ENCODE measurements at regions of chr14 and their contacts with region 1.

Region 1: GRCh38 chr14:61475316-61475715 is 153.9 kb downstream of the PRKCH start:
- DNase-seq: no peak
- H3K4me3 ChIP-seq: no peak overlapping the region
- H3K27me3 ChIP-seq: no peaks in the 10 kb centered on the region
- CTCF ChIP-seq: peak; percentile 63

Region 2: DNA sequence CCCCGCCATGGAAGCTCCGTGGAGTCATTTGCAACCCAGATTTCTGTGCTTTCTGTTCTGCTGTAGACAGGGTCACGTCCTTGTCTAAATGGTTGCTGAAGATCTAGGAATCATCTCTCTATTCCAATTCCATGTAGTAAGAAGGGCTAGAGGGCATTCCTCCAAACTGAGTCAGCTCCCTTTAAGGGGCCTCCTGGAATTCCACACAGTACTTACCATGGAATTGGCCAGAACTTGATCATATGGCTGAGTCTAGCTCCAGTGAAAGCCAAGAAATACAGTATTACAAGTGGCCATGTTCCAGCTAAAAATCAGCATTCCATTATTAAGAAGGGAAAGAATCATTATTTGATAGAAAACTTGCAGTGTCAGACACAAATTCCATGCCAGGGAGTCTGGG is 17.9 kb after region 1 on chr14:
- CTCF ChIA-PET with region 1: interaction called, 21 read pairs
- POLR2A ChIA-PET with region 1: no interaction called
- DNase-seq: no peak
- H3K4me3 ChIP-seq: no peak overlapping the region
- H3K27me3 ChIP-seq: no peaks in the 10 kb centered on the region
- CTCF ChIP-seq: no peak

Region 3: DNA sequence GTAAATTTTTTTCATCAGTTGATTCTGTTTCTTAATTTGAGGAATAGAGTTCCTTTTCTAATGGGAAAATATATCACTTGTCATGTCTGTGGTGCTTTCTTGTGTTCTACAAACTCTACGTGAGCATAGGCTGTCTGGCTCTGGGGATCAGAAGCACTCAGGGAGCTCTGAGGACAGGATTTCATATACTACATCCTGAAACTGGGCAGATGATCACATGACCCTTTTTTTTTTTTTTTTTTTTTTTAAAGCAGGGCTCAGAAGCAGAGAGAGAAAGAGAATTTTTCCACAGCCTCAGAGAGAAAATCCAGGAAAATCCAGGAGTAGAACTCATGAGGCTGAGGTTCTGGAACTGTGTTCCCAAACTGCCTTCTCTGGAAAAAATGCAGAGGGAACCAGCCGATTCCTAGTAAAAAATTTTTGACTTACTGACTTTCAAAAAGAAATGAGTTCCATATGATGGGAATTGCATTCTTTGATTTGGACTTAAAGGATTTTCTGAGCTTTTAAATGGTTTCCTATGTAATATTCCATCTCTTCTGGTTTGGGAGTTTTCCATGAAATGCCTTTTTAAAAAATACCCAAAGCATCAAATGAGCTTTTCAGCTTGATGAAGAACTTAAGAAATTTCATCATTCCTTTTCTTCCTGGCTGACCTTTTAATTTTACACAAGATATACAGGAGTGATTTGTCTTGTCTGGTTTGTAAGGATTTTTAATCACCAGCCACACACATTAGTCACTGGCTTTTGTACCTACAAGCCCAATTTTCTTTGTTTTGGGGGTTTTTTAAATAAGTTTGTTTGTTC is 36.9 kb after region 1 on chr14:
- CTCF ChIA-PET with region 1: interaction called, 13 read pairs
- POLR2A ChIA-PET with region 1: no interaction called
- DNase-seq: peak; percentile 85
- H3K4me3 ChIP-seq: no peak overlapping the region
- H3K27me3 ChIP-seq: no peaks in the 10 kb centered on the region
- CTCF ChIP-seq: no peak

Region 4: GRCh38 chr14:61525293-61526011 is 50.1 kb after region 1 on chr14:
- CTCF ChIA-PET with region 1: interaction called, 10 read pairs
- POLR2A ChIA-PET with region 1: no interaction called
- DNase-seq: no peak
- H3K4me3 ChIP-seq: no peak overlapping the region
- H3K27me3 ChIP-seq: no peaks in the 10 kb centered on the region
- CTCF ChIP-seq: no peak

Region 5: GRCh38 chr14:61537563-61538463 is 62.5 kb after region 1 on chr14:
- CTCF ChIA-PET with region 1: interaction called, 16 read pairs
- POLR2A ChIA-PET with region 1: no interaction called
- DNase-seq: no peak
- H3K4me3 ChIP-seq: no peak overlapping the region
- H3K27me3 ChIP-seq: no peaks in the 10 kb centered on the region
- CTCF ChIP-seq: no peak

Region 6: DNA sequence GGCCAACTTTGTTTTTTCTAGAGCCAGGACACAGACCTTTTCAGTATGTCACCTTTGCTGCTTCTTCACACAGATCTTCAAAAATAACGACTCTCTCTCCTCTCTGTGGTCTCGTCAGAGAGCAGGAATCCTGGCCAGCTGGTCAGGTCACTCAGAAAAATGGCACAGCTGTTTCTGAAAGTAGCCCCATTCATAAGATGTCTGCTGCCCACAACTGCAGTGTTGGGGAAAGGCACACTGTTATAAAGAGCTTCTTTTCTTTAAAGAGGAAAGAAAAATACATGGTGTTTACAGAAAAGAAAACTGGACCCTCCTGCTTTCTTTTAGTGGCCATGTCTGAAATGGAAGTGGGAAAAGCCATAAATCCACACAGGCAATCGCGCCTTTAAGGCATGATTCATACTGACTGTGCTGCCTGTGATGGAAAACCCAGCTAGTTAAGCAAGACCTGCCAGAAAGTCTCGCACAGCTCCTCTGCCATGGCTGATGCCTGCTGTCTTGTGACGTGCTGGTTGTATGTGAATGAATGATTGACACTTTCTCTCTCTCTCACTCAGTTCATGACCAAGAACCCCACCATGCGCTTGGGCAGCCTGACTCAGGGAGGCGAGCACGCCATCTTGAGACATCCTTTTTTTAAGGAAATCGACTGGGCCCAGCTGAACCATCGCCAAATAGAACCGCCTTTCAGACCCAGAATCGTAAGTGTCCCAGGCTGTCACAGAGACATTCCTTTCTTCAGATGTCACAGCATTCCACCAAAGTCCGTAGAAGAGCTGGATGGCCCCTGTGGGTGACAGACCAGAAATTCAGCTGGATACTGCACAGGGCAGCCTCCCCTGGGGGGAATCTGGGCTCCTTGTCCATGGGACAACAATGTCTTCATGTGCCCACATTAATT is 72.1 kb after region 1 on chr14:
- CTCF ChIA-PET with region 1: interaction called, 13 read pairs
- POLR2A ChIA-PET with region 1: no interaction called
- DNase-seq: no peak
- H3K4me3 ChIP-seq: no peak overlapping the region
- H3K27me3 ChIP-seq: no peaks in the 10 kb centered on the region
- CTCF ChIP-seq: no peak

Region 7: DNA sequence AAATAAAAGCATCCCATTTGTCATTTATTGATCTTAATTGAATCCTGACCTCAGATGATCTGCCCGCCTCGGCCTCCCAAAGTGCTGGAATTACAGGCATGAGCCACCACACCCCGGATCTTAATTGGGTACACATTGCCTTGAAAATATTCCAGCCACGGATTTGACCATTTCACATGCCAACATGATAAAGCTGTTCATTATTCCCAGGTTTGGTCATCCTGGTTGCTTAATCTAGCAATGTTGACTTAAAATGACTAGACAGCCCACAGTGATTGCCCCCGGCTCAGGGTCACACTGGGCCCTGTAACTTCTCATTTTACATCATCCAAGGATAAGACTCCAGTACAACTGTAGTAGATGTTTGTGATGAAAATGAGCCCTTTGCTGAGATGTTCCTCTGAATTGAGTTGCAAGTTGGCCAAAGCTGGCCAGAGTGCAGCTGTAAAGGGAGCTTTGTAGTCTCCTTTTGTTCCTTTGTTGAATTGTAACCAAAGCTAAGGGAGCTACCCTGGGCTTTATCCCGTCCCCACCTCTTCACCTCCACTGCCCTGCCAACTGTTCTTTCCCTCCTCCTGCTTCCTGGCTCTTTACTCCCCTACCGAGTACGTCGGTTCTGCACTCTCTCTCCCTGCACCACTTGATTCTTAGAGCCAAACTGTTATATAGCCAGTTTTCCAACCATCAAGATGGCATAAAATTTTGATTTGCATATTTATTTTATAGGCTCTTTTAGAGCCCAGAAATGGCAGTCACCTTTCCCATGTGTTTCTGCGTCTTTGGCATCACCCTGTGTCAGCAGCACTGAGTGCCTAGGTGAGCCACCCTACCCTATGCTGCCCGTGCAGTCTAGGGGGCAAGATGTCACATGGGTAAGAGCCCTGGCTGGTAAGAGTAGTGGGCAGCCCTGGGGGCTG is 78.7 kb after region 1 on chr14:
- CTCF ChIA-PET with region 1: interaction called, 17 read pairs
- POLR2A ChIA-PET with region 1: interaction called, 7 read pairs
- DNase-seq: peak; percentile 99
- H3K4me3 ChIP-seq: no peak overlapping the region
- H3K27me3 ChIP-seq: no peaks in the 10 kb centered on the region
- CTCF ChIP-seq: no peak